ENCODE measurements at regions of chr22 and their contacts with region 1.

Region 1: DNA sequence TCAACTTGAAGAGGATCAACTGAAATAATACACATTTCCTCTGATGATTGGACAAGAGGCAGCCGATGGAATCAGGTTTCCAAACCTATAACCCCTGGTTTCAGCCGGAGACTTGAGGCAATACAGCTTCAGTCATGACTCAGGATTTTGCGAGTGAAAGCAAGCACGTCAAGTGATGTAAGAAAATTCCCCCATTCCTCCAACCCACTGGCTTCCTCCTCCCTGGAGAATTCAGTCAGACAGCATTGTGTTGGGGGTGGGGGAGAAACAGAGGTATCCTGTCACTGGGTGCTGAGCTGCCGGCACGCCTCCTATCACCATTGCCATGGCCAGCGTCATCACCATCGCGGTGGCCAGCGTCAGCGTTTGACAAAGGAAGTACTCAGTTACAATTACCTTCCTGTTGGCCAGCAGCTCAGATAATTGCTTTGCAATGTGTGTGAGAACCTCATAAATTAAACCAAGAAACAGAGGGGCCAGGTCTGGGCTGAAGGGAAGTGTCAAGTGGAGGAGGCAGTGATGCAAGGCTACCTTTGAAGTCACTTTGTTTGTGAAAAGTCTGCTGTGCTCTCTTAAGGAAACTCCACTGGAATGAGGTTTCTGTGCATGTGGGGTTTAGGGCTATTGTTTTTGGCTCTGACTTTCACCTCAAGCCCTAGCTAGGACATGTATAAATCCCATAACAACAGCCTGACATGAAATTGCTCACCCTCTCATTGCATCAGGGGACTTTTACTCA is 50.2 kb downstream of the LIF start:
- DNase-seq: peak; percentile 95
- H3K4me3 ChIP-seq: peak overlapping the region in 1 of 3 experiments; percentile 44
- H3K27ac ChIP-seq: peak overlapping the region; percentile 99
- H3K4me1 ChIP-seq: peaks cover 47% of the 10 kb centered on the region
- H3K27me3 ChIP-seq: no peaks in the 10 kb centered on the region
- CTCF ChIP-seq: no peak
- POLR2A ChIP-seq: no peak

Region 2: GRCh38 chr22:29766632-29767170 is 429.6 kb before region 1 on chr22 and contains the start of gene ZMAT5:
- CTCF ChIA-PET with region 1: no interaction called
- POLR2A ChIA-PET with region 1: no interaction called
- dilution Hi-C with region 1: no loop called
- intact Hi-C with region 1: loop called (anchors 1 kb)
- DNase-seq: peak; percentile 96
- H3K4me3 ChIP-seq: peak within 1 kb of the TSS; percentile 44 to 98 (median 81)
- H3K27ac ChIP-seq: peak within 1 kb of the TSS; percentile 67
- H3K4me1 ChIP-seq: peaks cover 12% of the 10 kb centered on the region
- H3K27me3 ChIP-seq: no peaks in the 10 kb centered on the region
- CTCF ChIP-seq: no peak
- POLR2A ChIP-seq: peak; percentile 27
- total RNA-seq, gene ZMAT5: 23.1 and 24.9 TPM in 2 replicates

Region 3: DNA sequence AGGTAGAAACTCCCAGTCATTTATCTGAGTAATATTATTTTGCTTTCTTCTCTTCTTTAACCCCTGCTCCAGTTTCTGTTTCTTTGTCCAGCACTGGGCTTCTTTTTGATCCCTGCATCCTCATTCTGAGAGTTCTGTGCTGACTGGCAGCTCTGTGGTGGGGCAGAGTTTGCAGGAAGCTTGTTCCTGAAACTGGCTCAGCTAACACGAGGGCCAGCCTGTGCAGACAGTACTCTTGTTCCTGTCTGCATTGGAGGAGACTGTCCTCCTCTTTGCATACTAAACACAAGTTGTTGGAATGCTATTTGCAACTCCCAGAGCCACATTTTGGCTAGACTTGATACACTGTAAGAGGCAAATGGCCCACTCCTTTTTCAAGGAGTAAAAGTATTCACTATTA is 209.2 kb before region 1 on chr22:
- CTCF ChIA-PET with region 1: no interaction called
- POLR2A ChIA-PET with region 1: no interaction called
- dilution Hi-C with region 1: no loop called
- intact Hi-C with region 1: no loop called
- DNase-seq: no peak
- H3K4me3 ChIP-seq: no peak overlapping the region
- H3K27ac ChIP-seq: no peak overlapping the region
- H3K4me1 ChIP-seq: no peaks in the 10 kb centered on the region
- H3K27me3 ChIP-seq: no peaks in the 10 kb centered on the region
- CTCF ChIP-seq: no peak
- POLR2A ChIP-seq: no peak

Region 4: DNA sequence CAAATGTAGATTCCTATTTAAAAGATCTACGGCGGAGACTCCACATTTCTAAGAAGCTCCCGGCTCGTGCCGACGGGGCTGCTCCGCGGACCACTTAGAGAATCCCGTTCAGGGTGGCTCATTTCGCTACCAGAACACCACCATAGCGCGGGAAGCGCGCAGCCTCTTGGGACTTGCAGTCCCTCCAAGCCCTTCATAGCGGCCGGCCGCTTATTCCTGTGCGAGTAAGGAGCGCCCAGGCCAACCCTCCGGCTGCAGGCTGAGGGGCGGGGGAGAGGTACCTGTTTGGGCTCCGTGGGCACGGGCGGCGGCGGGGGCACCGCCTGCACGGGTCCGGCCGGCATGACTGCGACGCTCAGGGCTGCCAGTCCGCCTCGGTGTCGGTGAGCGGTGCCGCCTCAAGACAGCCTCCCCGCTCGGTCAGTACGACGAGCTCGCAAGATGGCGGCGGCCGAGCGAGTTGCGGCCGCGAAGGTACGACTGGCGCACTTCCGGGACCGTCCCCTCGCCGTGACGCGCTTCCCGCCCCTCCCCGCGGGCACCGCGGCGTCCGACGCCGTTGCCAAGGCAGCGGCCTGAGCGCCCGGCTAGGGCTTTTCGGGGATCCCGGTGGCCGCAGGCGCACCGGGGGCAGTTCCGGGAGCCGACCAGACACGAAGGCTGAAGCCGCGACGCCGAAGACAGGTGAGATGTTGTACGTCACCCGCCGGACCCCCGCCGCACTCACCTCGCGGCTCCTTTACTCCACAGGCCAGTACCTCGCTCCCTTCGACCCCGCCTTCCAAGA is 160.3 kb after region 1 on chr22 and contains the starts of genes CCDC157 and SF3A1:
- CTCF ChIA-PET with region 1: no interaction called
- POLR2A ChIA-PET with region 1: no interaction called
- dilution Hi-C with region 1: no loop called
- intact Hi-C with region 1: loop called (anchors 2 kb)
- DNase-seq: peak; percentile 95
- H3K4me3 ChIP-seq: peak within 1 kb of the TSS; percentile 64 to 94 (median 84)
- H3K27ac ChIP-seq: peak within 1 kb of the TSS; percentile 81
- H3K4me1 ChIP-seq: peaks cover 15% of the 10 kb centered on the region
- H3K27me3 ChIP-seq: no peaks in the 10 kb centered on the region
- CTCF ChIP-seq: no peak
- POLR2A ChIP-seq: peak; percentile 94
- total RNA-seq, gene CCDC157: 1.7 and 2.1 TPM in 2 replicates
- total RNA-seq, gene SF3A1: 173 and 187 TPM in 2 replicates

Region 5: GRCh38 chr22:30435674-30436126 is 239.4 kb after region 1 on chr22:
- CTCF ChIA-PET with region 1: no interaction called
- POLR2A ChIA-PET with region 1: no interaction called
- dilution Hi-C with region 1: no loop called
- intact Hi-C with region 1: no loop called
- DNase-seq: peak; percentile 31
- H3K4me3 ChIP-seq: no peak overlapping the region
- H3K27ac ChIP-seq: peak overlapping the region; percentile 63
- H3K4me1 ChIP-seq: peaks cover 10% of the 10 kb centered on the region
- H3K27me3 ChIP-seq: no peaks in the 10 kb centered on the region
- CTCF ChIP-seq: peak in 1 of 2 donors; percentile 11
- POLR2A ChIP-seq: no peak